ENCODE measurements at regions of chr7 and their contacts with region 1.

Region 1: GRCh38 chr7:992709-993607 is 10.0 kb downstream of the CYP2W1 start:
- DNase-seq: peak; percentile 97
- H3K4me3 Mint-ChIP-seq: no peak overlapping the region
- H3K27ac Mint-ChIP-seq: no peak overlapping the region
- H3K4me1 Mint-ChIP-seq: peaks cover 4% of the 10 kb centered on the region
- H3K27me3 Mint-ChIP-seq: no peaks in the 10 kb centered on the region

Region 2: GRCh38 chr7:863106-863505 is 129.9 kb before region 1 on chr7:
- CTCF ChIA-PET with region 1: no interaction called
- POLR2A ChIA-PET with region 1: interaction called, 11 read pairs
- DNase-seq: no peak
- H3K4me3 Mint-ChIP-seq: no peak overlapping the region
- H3K27ac Mint-ChIP-seq: no peak overlapping the region
- H3K4me1 Mint-ChIP-seq: no peaks in the 10 kb centered on the region
- H3K27me3 Mint-ChIP-seq: no peaks in the 10 kb centered on the region

Region 3: DNA sequence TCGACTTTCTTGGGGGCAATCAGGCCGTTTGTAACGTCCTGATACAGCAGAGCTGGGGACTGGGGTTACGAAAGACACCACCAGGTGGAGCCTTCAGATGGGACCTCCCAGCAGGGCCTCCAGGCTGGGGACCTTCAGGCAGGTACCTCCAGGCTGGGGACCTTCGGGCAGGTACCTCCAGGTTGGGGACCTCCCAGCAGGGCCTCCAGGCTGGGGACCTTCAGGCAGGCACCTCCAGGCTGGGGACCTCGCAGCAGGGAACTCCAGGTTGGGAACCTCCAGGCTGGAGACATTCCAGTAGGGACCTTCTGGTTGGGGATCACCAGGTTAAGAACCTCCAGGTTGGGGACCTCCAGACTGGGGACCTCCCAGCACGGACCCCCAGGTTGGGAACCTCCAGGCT is 27.9 kb after region 1 on chr7:
- CTCF ChIA-PET with region 1: interaction called, 23 read pairs
- POLR2A ChIA-PET with region 1: no interaction called
- DNase-seq: no peak
- H3K4me3 Mint-ChIP-seq: no peak overlapping the region
- H3K27ac Mint-ChIP-seq: no peak overlapping the region
- H3K4me1 Mint-ChIP-seq: peaks cover 8% of the 10 kb centered on the region
- H3K27me3 Mint-ChIP-seq: no peaks in the 10 kb centered on the region

Region 4: GRCh38 chr7:1065263-1066260 is 72.6 kb after region 1 on chr7:
- CTCF ChIA-PET with region 1: interaction called, 154 read pairs
- POLR2A ChIA-PET with region 1: interaction called, 3 read pairs
- DNase-seq: peak; percentile 88
- H3K4me3 Mint-ChIP-seq: peak overlapping the region; percentile 47
- H3K27ac Mint-ChIP-seq: peak overlapping the region; percentile 36
- H3K4me1 Mint-ChIP-seq: peaks cover 6% of the 10 kb centered on the region
- H3K27me3 Mint-ChIP-seq: no peaks in the 10 kb centered on the region

Region 5: GRCh38 chr7:1137510-1138167 is 144.7 kb after region 1 on chr7:
- CTCF ChIA-PET with region 1: interaction called, 13 read pairs
- POLR2A ChIA-PET with region 1: no interaction called
- DNase-seq: no peak
- H3K4me3 Mint-ChIP-seq: peak overlapping the region; percentile 82
- H3K27ac Mint-ChIP-seq: peak overlapping the region; percentile 92
- H3K4me1 Mint-ChIP-seq: peaks cover 14% of the 10 kb centered on the region
- H3K27me3 Mint-ChIP-seq: no peaks in the 10 kb centered on the region

Region 6: GRCh38 chr7:1175967-1176851 is 183.3 kb after region 1 on chr7:
- CTCF ChIA-PET with region 1: interaction called, 13 read pairs
- POLR2A ChIA-PET with region 1: no interaction called
- DNase-seq: peak; percentile 82
- H3K4me3 Mint-ChIP-seq: peak overlapping the region; percentile 30
- H3K27ac Mint-ChIP-seq: peak overlapping the region; percentile 74
- H3K4me1 Mint-ChIP-seq: peaks cover 17% of the 10 kb centered on the region
- H3K27me3 Mint-ChIP-seq: peaks cover 11% of the 10 kb centered on the region